Mammary epithelial cell (primary cell): ENCODE measurements at regions of chr19 and their contacts with region 1.

Region 1: GRCh38 chr19:45104658-45105349 is 11.8 kb downstream of the PPP1R37 start:
- DNase-seq: peak; percentile 27
- H3K4me3 ChIP-seq: no peak overlapping the region
- H3K27ac ChIP-seq: no peak overlapping the region
- H3K4me1 ChIP-seq: peaks cover 28% of the 10 kb centered on the region
- H3K27me3 ChIP-seq: no peaks in the 10 kb centered on the region
- CTCF ChIP-seq: no peak

Region 2: DNA sequence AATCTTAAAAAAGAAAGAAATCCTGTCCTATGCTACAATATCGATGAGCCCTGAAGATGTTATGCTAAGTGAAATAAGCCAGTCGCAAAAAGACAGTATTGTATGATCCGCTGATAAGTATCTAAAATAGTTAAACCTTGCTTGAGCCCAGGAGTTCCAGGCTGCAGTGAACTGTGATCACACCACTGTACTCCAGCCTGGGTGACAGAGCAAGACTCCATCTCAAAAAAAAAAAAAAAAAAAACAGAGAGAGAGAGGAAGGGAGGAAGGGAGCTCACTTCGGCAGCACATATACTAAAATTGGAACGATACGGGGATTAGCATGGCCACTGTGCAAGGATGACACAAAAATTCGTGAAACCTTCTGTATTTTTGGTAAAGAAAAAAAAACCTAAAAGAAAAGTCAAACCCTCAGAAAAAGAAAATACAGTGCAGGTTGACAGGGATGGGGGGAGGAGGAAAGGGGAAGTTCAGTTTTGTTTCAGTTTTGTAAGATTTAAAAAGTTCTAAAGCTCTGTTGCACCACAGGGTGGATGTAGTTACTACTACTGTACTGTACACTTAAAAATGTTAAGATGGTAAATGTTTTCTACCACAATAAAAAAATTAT is 57.5 kb before region 1 on chr19:
- CTCF ChIA-PET with region 1: no interaction called
- dilution Hi-C with region 1: loop called (anchors 5 kb)
- in situ Hi-C with region 1: no loop called
- intact Hi-C with region 1: no loop called
- DNase-seq: no peak
- H3K4me3 ChIP-seq: no peak overlapping the region
- H3K27ac ChIP-seq: no peak overlapping the region
- H3K4me1 ChIP-seq: peaks cover 21% of the 10 kb centered on the region
- H3K27me3 ChIP-seq: no peaks in the 10 kb centered on the region
- CTCF ChIP-seq: no peak

Region 3: GRCh38 chr19:45123430-45123850 is 18.6 kb after region 1 on chr19:
- CTCF ChIA-PET with region 1: no interaction called
- dilution Hi-C with region 1: no loop called
- in situ Hi-C with region 1: no loop called
- intact Hi-C with region 1: no loop called
- DNase-seq: peak; percentile 47
- H3K4me3 ChIP-seq: no peak overlapping the region
- H3K27ac ChIP-seq: no peak overlapping the region
- H3K4me1 ChIP-seq: peaks cover 17% of the 10 kb centered on the region
- H3K27me3 ChIP-seq: no peaks in the 10 kb centered on the region
- CTCF ChIP-seq: no peak

Region 4: GRCh38 chr19:45142726-45143110 is 37.9 kb after region 1 on chr19:
- CTCF ChIA-PET with region 1: no interaction called
- dilution Hi-C with region 1: loop called (anchors 5 kb)
- in situ Hi-C with region 1: no loop called
- intact Hi-C with region 1: no loop called
- DNase-seq: no peak
- H3K4me3 ChIP-seq: no peak overlapping the region
- H3K27ac ChIP-seq: no peak overlapping the region
- H3K4me1 ChIP-seq: peaks cover 13% of the 10 kb centered on the region
- H3K27me3 ChIP-seq: no peaks in the 10 kb centered on the region
- CTCF ChIP-seq: no peak

Region 5: DNA sequence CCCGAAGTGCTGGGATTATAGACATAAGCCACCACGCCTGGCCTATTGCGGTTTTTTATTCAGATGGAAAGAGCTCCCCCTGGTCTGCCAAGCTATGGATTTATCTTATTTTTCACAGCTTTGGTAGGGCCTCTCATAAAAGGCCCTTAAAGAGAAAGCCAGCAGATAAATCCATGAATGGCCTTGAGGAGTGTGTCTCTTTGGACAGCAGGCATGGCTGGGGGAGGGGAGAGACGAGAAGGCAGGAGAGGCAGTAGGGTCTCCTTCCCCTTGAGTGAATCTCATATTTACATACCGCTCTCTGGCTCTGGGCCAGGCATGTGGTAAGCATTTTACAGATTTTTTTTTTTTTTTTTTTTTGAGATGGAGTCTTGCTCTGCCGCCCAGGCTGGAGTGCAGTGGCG is 171.5 kb after region 1 on chr19:
- CTCF ChIA-PET with region 1: no interaction called
- dilution Hi-C with region 1: no loop called
- in situ Hi-C with region 1: no loop called
- intact Hi-C with region 1: no loop called
- DNase-seq: no peak
- H3K4me3 ChIP-seq: no peak overlapping the region
- H3K27ac ChIP-seq: no peak overlapping the region
- H3K4me1 ChIP-seq: no peaks in the 10 kb centered on the region
- H3K27me3 ChIP-seq: no peaks in the 10 kb centered on the region
- CTCF ChIP-seq: no peak

Region 6: GRCh38 chr19:45306518-45307027 is 201.8 kb after region 1 on chr19:
- CTCF ChIA-PET with region 1: no interaction called
- dilution Hi-C with region 1: no loop called
- in situ Hi-C with region 1: no loop called
- intact Hi-C with region 1: no loop called
- DNase-seq: no peak
- H3K4me3 ChIP-seq: no peak overlapping the region
- H3K27ac ChIP-seq: no peak overlapping the region
- H3K4me1 ChIP-seq: peaks cover 13% of the 10 kb centered on the region
- H3K27me3 ChIP-seq: no peaks in the 10 kb centered on the region
- CTCF ChIP-seq: no peak